ENCODE measurements at regions of chr19 and their contacts with region 1.

Region 1: DNA sequence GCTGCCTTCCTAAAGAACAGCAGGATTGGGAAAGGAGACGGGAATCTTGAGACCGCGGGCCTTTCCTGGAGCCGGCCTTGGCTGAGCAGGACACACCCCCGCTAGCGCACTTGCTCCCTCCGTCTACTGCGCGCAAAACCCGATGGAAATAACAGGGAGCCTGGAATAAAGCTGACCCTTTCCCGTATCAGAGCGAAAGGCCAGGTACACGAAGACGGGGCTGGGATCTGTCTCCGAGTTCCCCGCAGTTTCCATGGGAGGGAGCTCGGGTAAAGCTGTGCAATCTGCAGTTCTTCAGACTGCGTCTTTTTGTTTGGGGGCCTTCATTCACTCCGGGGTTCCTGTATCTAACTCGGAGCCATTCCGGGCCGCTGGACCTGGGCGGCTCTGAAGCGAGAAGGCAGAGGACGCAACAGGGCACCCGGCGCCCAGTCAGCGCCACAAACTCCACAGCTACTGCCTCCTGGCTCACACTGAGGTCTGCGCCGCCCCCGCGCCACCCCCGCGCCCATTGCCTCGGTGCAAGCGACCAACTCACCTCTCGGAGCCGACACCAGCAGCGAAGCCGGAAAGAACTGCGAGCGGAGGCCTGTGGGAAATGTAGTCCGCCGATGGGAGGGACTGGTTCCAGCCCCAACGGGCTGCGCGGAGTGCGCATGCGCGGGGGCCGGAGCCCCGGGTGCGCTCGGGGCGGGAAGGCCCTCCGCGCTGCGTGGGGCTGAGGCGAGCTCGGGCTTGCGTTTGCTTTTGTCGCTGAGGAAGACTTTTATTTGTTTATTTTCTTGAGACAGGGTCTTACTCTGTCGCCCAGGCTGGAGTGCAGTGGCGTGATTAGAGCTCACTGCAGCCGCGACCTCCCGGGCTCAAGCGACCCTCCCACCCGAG is at the start of gene ZFP14:
- DNase-seq: peak; percentile 92
- ATAC-seq: peak; percentile 99
- H3K4me3 Mint-ChIP-seq: peak within 1 kb of the TSS; percentile 94
- H3K27ac Mint-ChIP-seq: peak within 1 kb of the TSS; percentile 96
- H3K4me1 Mint-ChIP-seq: peaks cover 21% of the 10 kb centered on the region
- H3K27me3 Mint-ChIP-seq: no peaks in the 10 kb centered on the region
- CTCF ChIP-seq: no peak
- total RNA-seq, gene ZFP14: 7.7 and 10.4 TPM in 2 replicates

Region 2: GRCh38 chr19:36331353-36332228 is 47.3 kb before region 1 on chr19:
- CTCF ChIA-PET with region 1: interaction called, 3 read pairs
- POLR2A ChIA-PET with region 1: no interaction called
- intact Hi-C with region 1: loop called (anchors 1 kb)
- DNase-seq: peak; percentile 78
- ATAC-seq: peak; percentile 99
- H3K4me3 Mint-ChIP-seq: peak overlapping the region; percentile 86
- H3K27ac Mint-ChIP-seq: peak overlapping the region; percentile 76
- H3K4me1 Mint-ChIP-seq: peaks cover 26% of the 10 kb centered on the region
- H3K27me3 Mint-ChIP-seq: no peaks in the 10 kb centered on the region
- CTCF ChIP-seq: no peak

Region 3: GRCh38 chr19:36401475-36401874 is 22.6 kb after region 1 on chr19:
- CTCF ChIA-PET with region 1: no interaction called
- POLR2A ChIA-PET with region 1: interaction called, 8 read pairs
- intact Hi-C with region 1: loop called (anchors 1 kb)
- DNase-seq: no peak
- ATAC-seq: peak; percentile 95
- H3K4me3 Mint-ChIP-seq: peak overlapping the region; percentile 69
- H3K27ac Mint-ChIP-seq: peak overlapping the region; percentile 85
- H3K4me1 Mint-ChIP-seq: peaks cover 22% of the 10 kb centered on the region
- H3K27me3 Mint-ChIP-seq: no peaks in the 10 kb centered on the region
- CTCF ChIP-seq: no peak

Region 4: DNA sequence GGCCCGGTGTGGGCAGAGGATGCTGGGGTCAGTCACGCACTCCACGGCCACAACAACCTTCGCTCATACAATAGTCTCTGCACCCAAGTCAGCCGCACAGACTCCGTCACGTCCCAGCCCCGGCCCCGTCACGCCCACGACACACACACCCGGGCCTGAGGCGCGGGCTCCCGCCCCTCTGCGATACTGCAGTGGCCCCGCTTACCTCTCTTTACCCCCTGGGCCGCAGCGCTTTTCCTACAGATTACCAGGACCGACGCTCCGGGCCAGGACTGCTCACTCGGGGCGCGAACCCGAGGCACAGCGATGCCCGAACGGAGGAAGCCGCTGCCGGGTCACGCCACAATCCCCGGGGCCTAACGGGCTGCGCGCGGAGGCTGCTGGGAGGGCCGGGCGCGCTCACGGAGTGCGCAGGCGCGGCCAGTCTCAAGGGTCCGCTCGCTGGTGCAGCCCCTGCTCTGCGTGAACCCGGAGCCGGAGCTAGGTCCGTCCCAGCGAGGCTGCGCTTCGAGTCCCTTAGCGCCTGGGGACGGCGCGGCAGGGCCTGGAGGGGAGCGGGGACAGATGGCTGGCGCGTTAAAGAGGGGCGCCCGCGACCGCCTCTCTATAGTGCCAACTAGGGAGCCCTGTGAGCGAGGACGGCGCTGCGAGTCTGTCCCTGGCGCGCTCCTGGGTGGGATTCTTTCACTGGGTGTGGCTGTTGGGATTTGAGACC is 39.6 kb after region 1 on chr19 and contains the start of gene ZFP82:
- CTCF ChIA-PET with region 1: no interaction called
- POLR2A ChIA-PET with region 1: interaction called, 3 read pairs
- intact Hi-C with region 1: loop called (anchors 1 kb)
- DNase-seq: peak; percentile 87
- ATAC-seq: peak; percentile 95
- H3K4me3 Mint-ChIP-seq: peak within 1 kb of the TSS; percentile 97
- H3K27ac Mint-ChIP-seq: peak within 1 kb of the TSS; percentile 97
- H3K4me1 Mint-ChIP-seq: peaks cover 30% of the 10 kb centered on the region
- H3K27me3 Mint-ChIP-seq: peaks cover 15% of the 10 kb centered on the region
- CTCF ChIP-seq: no peak
- total RNA-seq, gene ZFP82: 10.4 and 11.4 TPM in 2 replicates

Region 5: GRCh38 chr19:36528194-36528920 is 149.5 kb after region 1 on chr19 and contains the start of gene ZNF260:
- CTCF ChIA-PET with region 1: no interaction called
- POLR2A ChIA-PET with region 1: interaction called, 18 read pairs
- intact Hi-C with region 1: loop called (anchors 1 kb)
- DNase-seq: peak; percentile 94
- ATAC-seq: peak; percentile 89
- H3K4me3 Mint-ChIP-seq: peak within 1 kb of the TSS; percentile 99
- H3K27ac Mint-ChIP-seq: peak within 1 kb of the TSS; percentile 99
- H3K4me1 Mint-ChIP-seq: peaks cover 27% of the 10 kb centered on the region
- H3K27me3 Mint-ChIP-seq: no peaks in the 10 kb centered on the region
- CTCF ChIP-seq: no peak
- total RNA-seq, gene ZNF260: 9.8 and 13.6 TPM in 2 replicates

Region 6: DNA sequence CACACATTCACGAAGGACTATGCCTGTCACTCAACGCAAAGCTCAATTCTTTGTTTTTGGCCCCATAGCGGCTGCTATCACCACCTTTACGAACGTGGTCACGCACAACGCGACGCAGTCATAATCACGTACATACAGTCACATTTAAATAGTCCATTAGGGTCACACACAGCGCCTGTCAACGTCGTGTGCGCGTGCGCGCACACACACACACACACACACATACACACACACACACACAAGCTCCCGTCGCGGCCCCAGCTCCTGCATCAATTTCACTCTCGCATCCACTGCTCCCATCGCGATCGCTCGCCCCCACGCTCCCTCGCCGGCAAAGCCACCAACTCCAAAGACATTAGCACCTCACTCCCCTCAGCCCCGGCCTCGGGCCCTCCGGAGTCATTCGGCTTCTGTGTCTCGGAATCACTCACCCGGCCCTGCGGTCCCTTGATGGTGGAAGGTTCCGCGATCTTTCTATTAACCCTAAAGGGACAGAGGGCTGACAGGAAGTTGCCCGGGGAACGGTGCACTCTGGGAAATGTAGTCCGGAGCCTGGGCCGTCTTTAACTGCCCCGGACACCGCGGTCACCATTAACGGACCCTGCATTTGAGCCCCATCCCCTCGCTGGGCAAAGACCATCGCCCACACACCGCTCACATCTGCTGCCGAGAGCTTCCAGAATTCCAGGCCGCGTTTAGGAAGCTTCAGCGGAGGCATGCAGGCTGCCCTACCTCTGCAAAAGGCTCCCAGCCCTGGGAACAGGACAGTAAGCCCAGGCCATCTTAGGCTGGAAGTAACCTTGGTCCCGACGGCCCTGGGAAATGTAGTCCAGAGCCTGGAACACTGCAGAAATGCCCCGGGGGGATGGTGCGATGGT is 459.3 kb after region 1 on chr19 and contains the start of gene ZNF790:
- CTCF ChIA-PET with region 1: no interaction called
- POLR2A ChIA-PET with region 1: interaction called, 6 read pairs
- intact Hi-C with region 1: loop called (anchors 5 kb)
- DNase-seq: peak; percentile 76
- ATAC-seq: peak; percentile 94
- H3K4me3 Mint-ChIP-seq: no peak within 1 kb of the TSS
- H3K27ac Mint-ChIP-seq: no peak within 1 kb of the TSS
- H3K4me1 Mint-ChIP-seq: peaks cover 2% of the 10 kb centered on the region
- H3K27me3 Mint-ChIP-seq: no peaks in the 10 kb centered on the region
- CTCF ChIP-seq: no peak
- total RNA-seq, gene ZNF790: 10.3 and 11.5 TPM in 2 replicates